Cardiac septum (tissue), 1 donor: ENCODE measurements at regions of chr19 and their contacts with region 1.

Region 1: GRCh38 chr19:49148784-49149651 is 6.2 kb downstream of the HRC start:
- DNase-seq: peak; percentile 97

Region 2: DNA sequence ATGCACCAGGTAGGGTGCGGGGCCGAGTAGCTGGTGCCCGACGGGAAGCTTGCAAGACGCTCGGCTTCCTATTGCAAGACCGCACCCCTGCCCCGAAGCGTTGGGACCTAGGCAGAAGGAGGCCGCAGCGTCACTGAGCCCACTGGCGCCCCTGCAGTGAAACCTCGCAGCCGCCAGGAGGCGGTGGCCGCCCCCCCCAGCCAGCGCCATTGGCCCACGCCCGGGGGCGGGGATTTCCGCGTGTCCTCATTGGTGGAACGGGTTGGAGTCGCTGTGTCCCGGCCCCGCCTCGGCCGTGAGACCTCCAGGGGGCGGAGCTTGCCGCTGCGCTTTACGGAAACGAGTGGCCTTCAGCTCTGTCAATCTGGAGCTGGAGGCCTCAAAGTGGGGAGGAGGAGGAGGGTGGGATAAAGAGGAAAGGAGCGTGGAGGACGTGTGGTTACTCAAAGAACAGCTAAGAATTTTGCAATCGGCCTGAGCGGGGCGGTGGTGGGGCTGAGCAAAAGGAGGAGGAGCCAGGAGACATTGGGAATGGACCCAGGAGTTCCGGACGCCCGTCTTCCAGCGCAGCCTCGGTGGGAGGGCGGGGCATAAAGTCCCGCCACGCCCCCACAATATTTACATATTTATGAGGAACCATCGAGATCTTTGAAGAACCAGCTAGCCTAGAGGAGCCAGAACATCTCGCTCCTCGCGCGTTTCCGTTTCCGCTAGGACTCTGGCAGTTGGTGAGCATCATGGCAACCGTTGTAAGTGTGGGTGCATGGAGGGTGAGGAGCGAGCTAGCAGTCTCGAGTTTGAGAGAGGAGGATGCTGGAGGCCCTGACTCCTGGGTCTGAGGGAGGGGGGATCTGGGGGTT is 155.6 kb before region 1 on chr19 and contains the starts of genes GYS1 and RUVBL2:
- intact Hi-C with region 1: loop called (anchors 5 kb)
- DNase-seq: peak; percentile 100
- total RNA-seq, gene GYS1: 175 TPM
- total RNA-seq, gene RUVBL2: 39.2 TPM

Region 3: GRCh38 chr19:49097455-49098288 is 51.3 kb before region 1 on chr19:
- intact Hi-C with region 1: loop called (anchors 5 kb)
- DNase-seq: peak; percentile 84

Region 4: GRCh38 chr19:49118565-49119410 is 30.2 kb before region 1 on chr19 and contains the start of gene C19orf73:
- intact Hi-C with region 1: loop called (anchors 2 kb)
- DNase-seq: peak; percentile 97
- total RNA-seq, gene C19orf73: 1.0 TPM

Region 5: DNA sequence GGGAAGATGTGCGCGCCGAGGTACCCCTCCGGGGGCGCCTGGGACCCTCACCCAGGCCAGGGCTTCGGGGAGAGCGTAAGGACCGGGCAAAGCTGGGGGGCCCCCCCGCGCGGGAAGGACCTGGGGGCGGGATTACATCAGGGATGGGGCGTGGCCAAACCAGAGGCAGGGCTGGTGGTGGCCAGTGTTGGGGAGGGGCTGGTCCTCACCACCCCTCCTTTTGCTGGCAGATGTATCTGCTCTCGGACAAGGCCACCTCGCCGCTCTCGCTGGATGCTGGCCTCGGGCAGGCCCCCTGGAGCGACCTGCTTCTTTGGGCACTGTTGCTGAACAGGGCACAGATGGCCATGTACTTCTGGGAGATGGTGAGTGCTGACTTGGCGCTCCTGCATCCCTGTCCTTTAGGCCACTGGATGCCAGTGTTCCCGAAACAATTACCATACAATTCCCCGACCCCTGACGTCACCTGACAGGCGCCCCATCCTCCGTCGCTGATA is 33.9 kb after region 1 on chr19:
- intact Hi-C with region 1: no loop called
- DNase-seq: no peak